Right cardiac atrium (tissue), 5 donors: ENCODE measurements at regions of chr15 and their contacts with region 1.

Region 1: GRCh38 chr15:92077353-92078085 is 224.0 kb downstream of the SLCO3A1 start:
- DNase-seq: peak; percentile 74 to 85 (median 85)
- ATAC-seq: peak; percentile 71 to 76
- H3K4me3 ChIP-seq: no peak overlapping the region
- H3K27ac ChIP-seq: no peak overlapping the region
- H3K4me1 ChIP-seq: peaks cover 23% of the 10 kb centered on the region
- H3K27me3 ChIP-seq: no peaks in the 10 kb centered on the region

Region 2: DNA sequence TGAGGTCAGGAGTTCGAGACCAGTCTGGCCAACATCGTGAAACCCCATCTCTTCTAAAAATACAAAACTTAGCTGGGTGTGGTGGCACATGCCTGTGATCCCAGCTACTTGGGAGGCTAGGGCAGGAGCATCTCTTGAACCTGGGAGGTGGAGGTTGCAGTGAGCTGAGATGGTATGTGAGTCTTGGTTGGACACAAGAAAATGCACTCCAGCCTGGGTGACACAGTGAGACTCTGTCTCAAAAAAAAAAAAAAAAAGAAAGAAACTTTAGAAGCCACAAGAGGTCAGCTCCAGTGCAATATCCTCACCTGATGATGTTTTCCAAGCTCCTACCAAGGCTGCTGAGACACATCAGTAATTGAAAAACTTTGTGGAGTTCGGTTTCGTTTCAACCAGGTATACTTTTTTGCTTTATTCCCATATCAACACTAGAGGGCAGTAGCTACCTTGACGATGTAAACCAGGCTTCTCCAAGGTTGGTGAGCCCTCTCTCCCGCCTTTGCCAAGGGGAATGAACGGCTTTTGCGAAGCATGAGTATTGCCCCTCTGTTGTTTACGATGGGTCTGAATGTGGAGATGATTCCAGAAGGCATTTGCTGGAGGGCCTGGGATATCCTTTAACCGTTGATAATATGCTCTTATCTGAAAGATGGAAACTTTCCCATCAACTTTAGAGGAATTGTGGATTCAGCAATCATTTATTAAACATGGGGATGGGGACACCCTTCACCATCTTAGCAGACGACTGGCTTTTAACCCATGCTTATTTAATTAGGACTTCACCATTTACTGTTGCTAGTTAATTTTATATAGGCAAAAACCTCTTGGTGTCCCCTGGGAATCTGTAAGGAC is 774.7 kb before region 1 on chr15:
- intact Hi-C with region 1: loop called (anchors 2 to 10 kb)
- DNase-seq: peak in 2 of 3 donors; percentile 39 to 50
- ATAC-seq: peak; percentile 77 to 88
- H3K4me3 ChIP-seq: no peak overlapping the region
- H3K27ac ChIP-seq: no peak overlapping the region
- H3K4me1 ChIP-seq: no peaks in the 10 kb centered on the region
- H3K27me3 ChIP-seq: no peaks in the 10 kb centered on the region

Region 3: DNA sequence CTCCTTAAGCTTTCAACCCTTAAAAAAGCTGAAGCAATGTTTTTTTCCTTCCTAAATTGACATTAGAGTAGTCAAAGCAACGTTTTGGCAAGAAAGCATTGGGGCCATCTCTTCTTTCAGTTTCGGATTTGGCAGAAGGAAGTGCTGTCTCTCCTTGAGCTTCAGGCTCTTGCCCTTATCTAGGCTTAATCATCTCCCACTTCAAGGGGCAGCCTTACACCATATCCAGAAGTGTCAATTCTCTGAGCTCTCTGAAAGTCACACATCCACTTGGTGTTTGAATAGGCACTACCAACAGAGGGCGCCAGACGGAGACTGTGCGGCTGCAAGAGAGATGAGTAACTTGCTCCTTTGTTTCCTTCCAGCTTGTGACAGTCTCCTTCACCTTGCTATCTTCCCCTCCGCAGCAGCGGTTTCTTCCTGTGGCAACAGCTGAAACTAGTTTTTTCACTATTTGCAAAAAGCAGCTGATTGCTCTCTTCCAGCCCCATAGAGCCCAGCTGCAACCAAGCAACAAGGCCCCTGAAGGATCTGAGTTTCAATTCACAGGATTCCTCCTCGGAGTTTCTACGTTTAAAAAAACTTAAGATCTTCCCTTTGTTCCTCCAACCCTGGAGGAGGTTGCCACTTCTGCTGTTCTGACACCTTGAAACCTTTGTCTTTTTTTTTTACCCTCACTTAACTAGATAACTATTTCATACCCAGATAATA is 371.0 kb before region 1 on chr15:
- intact Hi-C with region 1: loop called (anchors 5 to 10 kb)
- DNase-seq: peak; percentile 78 to 80 (median 79)
- ATAC-seq: peak; percentile 85 to 87
- H3K4me3 ChIP-seq: no peak overlapping the region
- H3K27ac ChIP-seq: no peak overlapping the region
- H3K4me1 ChIP-seq: peaks cover 4% of the 10 kb centered on the region
- H3K27me3 ChIP-seq: no peaks in the 10 kb centered on the region

Region 4: DNA sequence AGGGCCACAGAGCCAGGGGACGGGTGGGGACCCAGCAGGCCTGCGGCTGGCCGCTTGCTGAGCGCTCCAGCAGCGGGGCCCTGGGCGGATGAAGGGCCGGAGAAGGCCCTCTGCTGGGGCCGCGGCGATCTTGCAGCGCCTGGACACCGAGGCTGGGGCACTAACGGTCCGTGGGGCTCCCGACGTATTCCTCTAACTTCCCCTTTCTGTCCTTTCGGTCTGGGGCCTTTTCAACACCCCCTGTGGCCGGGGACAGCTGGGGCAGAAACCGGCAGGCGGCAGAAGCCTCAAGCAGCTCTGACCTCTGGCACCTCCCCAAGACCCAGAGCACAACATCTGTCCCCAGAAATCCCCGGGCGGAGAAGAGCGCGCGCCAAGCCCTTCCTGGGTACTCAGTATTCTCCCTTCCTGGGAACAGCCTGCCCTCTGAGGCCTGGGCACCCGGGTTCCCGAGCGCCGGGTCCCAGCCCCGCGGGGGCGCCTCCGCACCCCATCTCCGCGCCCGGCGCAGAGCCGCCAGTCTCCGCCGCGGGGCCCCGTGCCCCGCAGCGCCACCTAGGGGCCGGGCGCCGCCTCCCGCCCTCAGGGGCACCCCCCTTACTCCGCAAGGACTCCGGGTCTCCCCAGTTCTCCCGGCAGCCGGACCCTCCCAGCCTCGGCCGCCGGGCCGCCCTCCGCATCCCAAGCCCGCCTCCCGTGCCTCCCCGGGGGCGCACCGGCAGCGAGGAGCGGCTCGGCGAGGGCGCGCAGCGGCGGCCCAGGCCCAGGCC is 224.6 kb before region 1 on chr15:
- intact Hi-C with region 1: loop called (anchors 5 to 10 kb)
- DNase-seq: peak; percentile 85 to 93 (median 92)
- ATAC-seq: peak; percentile 88 to 90
- H3K4me3 ChIP-seq: peak overlapping the region; percentile 81
- H3K27ac ChIP-seq: peak overlapping the region; percentile 94
- H3K4me1 ChIP-seq: peaks cover 22% of the 10 kb centered on the region
- H3K27me3 ChIP-seq: no peaks in the 10 kb centered on the region

Region 5: DNA sequence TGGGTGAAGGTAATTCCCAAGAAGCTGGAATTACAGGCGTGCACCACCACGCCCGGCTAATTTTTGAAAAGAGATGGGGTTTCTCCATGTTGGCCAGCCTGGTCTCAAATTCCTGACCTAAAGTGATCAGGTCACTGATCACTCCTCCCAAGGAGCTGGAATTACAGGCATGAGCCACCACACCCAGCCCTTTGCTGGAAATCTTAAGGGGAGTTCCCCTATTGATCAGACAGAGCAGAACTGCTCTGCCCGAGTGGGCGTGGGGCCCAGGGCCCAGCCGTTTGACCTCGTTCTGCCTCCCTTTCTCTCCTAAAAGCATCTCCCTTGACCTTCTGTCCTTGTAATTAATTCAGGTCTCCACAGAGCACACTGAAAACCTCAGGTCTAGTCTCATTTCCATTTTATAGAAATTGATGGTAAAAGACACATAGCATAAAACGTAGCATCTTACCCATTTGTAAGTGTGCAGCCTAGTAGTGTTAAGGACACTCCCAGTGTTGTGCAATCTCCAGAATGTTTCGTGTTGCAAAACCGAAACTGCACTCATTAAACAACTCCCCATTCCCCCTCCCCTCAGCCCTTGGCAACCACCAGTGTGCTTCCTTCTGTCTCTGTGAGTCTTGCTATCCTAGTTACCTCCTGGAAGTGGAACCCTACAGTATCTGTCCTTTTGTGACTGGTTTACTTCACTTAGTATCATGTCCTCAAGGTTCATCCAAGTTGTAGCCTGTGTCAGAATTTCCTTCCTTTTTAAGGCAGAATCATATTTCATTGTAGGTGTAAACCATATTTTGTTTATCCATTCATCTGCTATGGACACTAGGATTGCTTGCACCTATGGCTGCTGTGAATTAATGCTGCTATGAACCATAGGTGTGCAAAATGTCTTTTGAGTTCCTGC is 134.6 kb before region 1 on chr15:
- intact Hi-C with region 1: loop called in 3 of 4 experiments (anchors 5 to 10 kb)
- DNase-seq: peak; percentile 85 to 90 (median 87)
- ATAC-seq: peak; percentile 85 to 88
- H3K4me3 ChIP-seq: no peak overlapping the region
- H3K27ac ChIP-seq: peak overlapping the region; percentile 43
- H3K4me1 ChIP-seq: peaks cover 48% of the 10 kb centered on the region
- H3K27me3 ChIP-seq: no peaks in the 10 kb centered on the region

Region 6: DNA sequence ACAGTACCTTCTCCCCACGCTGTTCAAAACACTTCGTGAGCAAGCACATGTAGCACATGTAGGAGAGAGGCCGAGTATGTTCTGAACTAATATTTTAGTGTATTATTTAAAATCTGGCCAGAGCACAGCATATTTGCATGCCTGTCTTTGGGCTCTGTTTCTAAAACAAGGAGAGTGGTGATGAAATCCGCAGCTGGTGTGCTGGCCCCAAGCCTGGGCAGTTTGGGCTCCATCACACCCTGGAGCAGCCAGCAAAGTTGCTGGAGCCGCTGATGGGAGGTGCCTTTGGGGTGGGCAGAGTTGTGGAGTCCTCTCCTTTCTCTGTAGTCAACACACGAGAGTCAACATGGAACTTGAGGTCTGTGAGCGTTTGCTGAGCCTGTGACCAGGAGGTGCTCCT is 107.4 kb before region 1 on chr15:
- intact Hi-C with region 1: loop called in 1 of 4 experiments (anchors 10 kb)
- DNase-seq: peak; percentile 84 to 95 (median 93)
- ATAC-seq: peak; percentile 79 to 90
- H3K4me3 ChIP-seq: no peak overlapping the region
- H3K27ac ChIP-seq: peak overlapping the region; percentile 70
- H3K4me1 ChIP-seq: peaks cover 43% of the 10 kb centered on the region
- H3K27me3 ChIP-seq: no peaks in the 10 kb centered on the region

Region 7: GRCh38 chr15:92365067-92365466 is 287.5 kb after region 1 on chr15:
- intact Hi-C with region 1: no loop called
- DNase-seq: no peak
- ATAC-seq: no peak
- H3K4me3 ChIP-seq: no peak overlapping the region
- H3K27ac ChIP-seq: no peak overlapping the region
- H3K4me1 ChIP-seq: no peaks in the 10 kb centered on the region
- H3K27me3 ChIP-seq: no peaks in the 10 kb centered on the region

Region 8: GRCh38 chr15:92763459-92763858 is 685.9 kb after region 1 on chr15:
- intact Hi-C with region 1: no loop called
- DNase-seq: no peak
- ATAC-seq: no peak
- H3K4me3 ChIP-seq: no peak overlapping the region
- H3K27ac ChIP-seq: no peak overlapping the region
- H3K4me1 ChIP-seq: no peaks in the 10 kb centered on the region
- H3K27me3 ChIP-seq: no peaks in the 10 kb centered on the region